MCF 10A (cell line): ENCODE measurements at regions of chr12 and their contacts with region 1.

Region 1: GRCh38 chr12:67222302-67222701 is 46.9 kb upstream of the CAND1 start:
- DNase-seq: peak; percentile 50
- H3K4me3 Mint-ChIP-seq: no peak overlapping the region
- H3K27ac Mint-ChIP-seq: no peak overlapping the region
- H3K4me1 Mint-ChIP-seq: no peaks in the 10 kb centered on the region
- H3K27me3 Mint-ChIP-seq: peaks cover 21% of the 10 kb centered on the region
- CTCF ChIP-seq: peak; percentile 44

Region 2: GRCh38 chr12:66901138-66901932 is 321.0 kb before region 1 on chr12:
- CTCF ChIA-PET with region 1: interaction called, 42 read pairs
- POLR2A ChIA-PET with region 1: no interaction called
- intact Hi-C with region 1: loop called (anchors 1 kb)
- DNase-seq: no peak
- H3K4me3 Mint-ChIP-seq: no peak overlapping the region
- H3K27ac Mint-ChIP-seq: no peak overlapping the region
- H3K4me1 Mint-ChIP-seq: peaks cover 10% of the 10 kb centered on the region
- H3K27me3 Mint-ChIP-seq: no peaks in the 10 kb centered on the region
- CTCF ChIP-seq: no peak

Region 3: GRCh38 chr12:67034492-67034891 is 187.8 kb before region 1 on chr12:
- CTCF ChIA-PET with region 1: interaction called, 10 read pairs
- POLR2A ChIA-PET with region 1: no interaction called
- intact Hi-C with region 1: no loop called
- DNase-seq: peak; percentile 90
- H3K4me3 Mint-ChIP-seq: no peak overlapping the region
- H3K27ac Mint-ChIP-seq: no peak overlapping the region
- H3K4me1 Mint-ChIP-seq: peaks cover 4% of the 10 kb centered on the region
- H3K27me3 Mint-ChIP-seq: no peaks in the 10 kb centered on the region
- CTCF ChIP-seq: no peak

Region 4: GRCh38 chr12:67085736-67086515 is 136.4 kb before region 1 on chr12:
- CTCF ChIA-PET with region 1: interaction called, 17 read pairs
- POLR2A ChIA-PET with region 1: no interaction called
- intact Hi-C with region 1: no loop called
- DNase-seq: no peak
- H3K4me3 Mint-ChIP-seq: no peak overlapping the region
- H3K27ac Mint-ChIP-seq: no peak overlapping the region
- H3K4me1 Mint-ChIP-seq: peaks cover 3% of the 10 kb centered on the region
- H3K27me3 Mint-ChIP-seq: peaks cover 14% of the 10 kb centered on the region
- CTCF ChIP-seq: no peak

Region 5: DNA sequence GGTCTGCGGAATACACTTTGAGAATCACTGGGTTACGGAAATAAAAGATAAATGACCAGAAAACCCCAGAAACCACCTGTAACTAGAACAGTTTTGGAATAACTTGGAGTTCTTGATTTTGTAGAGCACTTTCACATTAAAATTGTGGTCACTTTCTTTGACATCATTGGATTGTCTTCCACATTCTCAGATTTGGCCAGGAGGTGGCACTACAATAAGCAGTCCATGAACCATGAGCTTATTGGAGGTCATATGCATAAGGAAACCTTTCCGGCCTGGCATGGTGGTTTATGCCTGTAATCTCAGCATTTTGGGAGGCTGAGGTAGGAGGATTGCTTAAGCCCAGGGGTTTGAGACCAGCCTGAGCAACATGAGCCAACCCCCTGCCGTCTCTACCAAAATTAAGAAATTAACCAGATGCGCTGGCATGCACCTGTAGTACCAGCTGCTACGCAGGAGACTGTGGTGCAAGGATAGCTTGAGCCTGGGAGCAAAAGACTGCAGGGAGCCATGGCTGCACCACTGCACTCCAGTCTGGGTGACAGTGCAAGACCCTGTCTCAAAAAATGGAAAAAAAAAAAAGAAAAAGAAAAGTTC is 60.9 kb before region 1 on chr12:
- CTCF ChIA-PET with region 1: interaction called, 32 read pairs
- POLR2A ChIA-PET with region 1: no interaction called
- intact Hi-C with region 1: loop called (anchors 1 kb)
- DNase-seq: peak; percentile 61
- H3K4me3 Mint-ChIP-seq: no peak overlapping the region
- H3K27ac Mint-ChIP-seq: no peak overlapping the region
- H3K4me1 Mint-ChIP-seq: no peaks in the 10 kb centered on the region
- H3K27me3 Mint-ChIP-seq: peaks cover 59% of the 10 kb centered on the region
- CTCF ChIP-seq: peak; percentile 41

Region 6: GRCh38 chr12:67251012-67251411 is 28.7 kb after region 1 on chr12:
- CTCF ChIA-PET with region 1: interaction called, 10 read pairs
- POLR2A ChIA-PET with region 1: no interaction called
- intact Hi-C with region 1: no loop called
- DNase-seq: no peak
- H3K4me3 Mint-ChIP-seq: no peak overlapping the region
- H3K27ac Mint-ChIP-seq: no peak overlapping the region
- H3K4me1 Mint-ChIP-seq: no peaks in the 10 kb centered on the region
- H3K27me3 Mint-ChIP-seq: no peaks in the 10 kb centered on the region
- CTCF ChIP-seq: no peak

Region 7: GRCh38 chr12:67275380-67275925 is 53.2 kb after region 1 on chr12:
- CTCF ChIA-PET with region 1: no interaction called
- POLR2A ChIA-PET with region 1: no interaction called
- intact Hi-C with region 1: no loop called
- DNase-seq: no peak
- H3K4me3 Mint-ChIP-seq: no peak overlapping the region
- H3K27ac Mint-ChIP-seq: peak overlapping the region; percentile 41
- H3K4me1 Mint-ChIP-seq: peaks cover 62% of the 10 kb centered on the region
- H3K27me3 Mint-ChIP-seq: no peaks in the 10 kb centered on the region
- CTCF ChIP-seq: no peak